ENCODE measurements at regions of chr1 and their contacts with region 1.

Region 1: DNA sequence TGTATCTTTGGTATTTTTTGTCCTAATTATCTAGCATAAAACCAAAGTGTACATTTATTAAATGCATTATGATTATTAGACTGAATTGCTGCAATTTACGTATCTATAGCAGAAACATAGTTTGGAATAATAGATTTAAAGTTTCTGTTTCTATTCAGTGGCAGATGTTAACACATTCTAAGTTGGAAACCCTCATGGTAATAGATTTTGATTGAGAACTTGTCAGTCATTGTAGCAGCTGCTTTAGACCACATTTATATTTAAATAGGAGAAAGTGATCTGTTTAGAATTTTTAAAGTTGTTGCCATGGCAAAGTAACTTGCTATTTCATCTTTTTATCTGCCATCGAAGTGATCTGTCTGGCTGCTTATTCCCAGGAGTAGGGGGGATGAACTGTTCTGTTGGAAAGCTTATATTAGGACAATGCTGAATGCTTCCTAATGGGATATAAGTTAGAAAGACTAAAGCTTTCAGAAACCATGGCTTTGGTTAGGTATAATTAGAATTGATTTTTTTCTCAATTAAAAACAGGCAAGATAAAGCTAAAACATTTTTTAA is 61.6 kb downstream of the HS2ST1 start:
- DNase-seq: no peak
- ATAC-seq: no peak
- H3K4me3 ChIP-seq: no peak overlapping the region
- H3K27ac ChIP-seq: no peak overlapping the region
- H3K4me1 ChIP-seq: no peaks in the 10 kb centered on the region
- H3K27me3 ChIP-seq: no peaks in the 10 kb centered on the region
- CTCF ChIP-seq: no peak
- EP300 ChIP-seq: no peak
- POLR2A ChIP-seq: no peak
- RAD21 ChIP-seq: no peak

Region 2: DNA sequence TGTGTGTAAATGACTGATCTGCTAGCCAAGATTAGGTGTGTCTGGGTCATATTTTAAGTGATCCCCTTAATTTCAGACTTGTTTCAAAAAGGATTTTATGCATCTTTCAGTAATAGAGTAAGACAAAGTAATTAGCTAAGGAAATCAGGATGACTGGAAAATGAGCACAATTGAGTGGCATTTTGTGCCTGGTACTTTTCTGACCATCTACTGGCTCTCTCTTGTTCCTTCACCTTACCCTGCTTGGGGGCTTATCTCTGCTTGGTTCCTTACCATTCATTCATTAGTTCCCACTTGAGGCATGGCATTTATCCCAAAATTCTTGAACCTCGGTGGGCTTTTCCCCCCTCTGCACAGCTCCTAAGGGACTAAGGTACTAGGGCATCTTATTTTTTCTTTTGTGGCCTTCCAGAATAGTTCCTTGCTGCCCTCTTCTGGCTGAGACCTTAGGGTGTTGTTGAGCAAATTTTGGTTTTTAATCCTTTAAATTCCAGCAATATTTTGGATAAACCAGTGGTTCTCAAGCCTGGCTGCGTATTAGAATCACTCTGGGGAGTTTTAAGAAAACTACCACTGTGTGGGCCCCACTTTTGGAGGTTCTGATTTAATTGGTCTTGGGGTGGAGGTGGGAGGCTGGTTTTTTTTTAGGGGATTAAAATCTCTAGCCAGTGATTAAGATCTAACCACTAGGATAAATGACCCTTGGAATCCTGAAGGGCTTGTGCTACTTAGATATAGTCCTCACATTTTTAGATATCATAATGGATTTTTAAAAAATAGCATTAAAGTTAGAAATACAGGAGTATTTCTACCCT is 10.9 kb before region 1 on chr1:
- CTCF ChIA-PET with region 1: interaction called, 10 read pairs
- POLR2A ChIA-PET with region 1: interaction called, 3 read pairs
- RAD21 ChIA-PET with region 1: interaction called, 7 read pairs
- SMC1A ChIA-PET with region 1: interaction called, 27 read pairs
- in situ Hi-C with region 1: no loop called
- intact Hi-C with region 1: no loop called
- DNase-seq: no peak
- ATAC-seq: peak; percentile 81
- H3K4me3 ChIP-seq: no peak overlapping the region
- H3K27ac ChIP-seq: peak overlapping the region; percentile 8; the same call in 1 of the 2 replicates
- H3K4me1 ChIP-seq: peaks cover 4% of the 10 kb centered on the region; the same call in 1 of the 2 replicates
- H3K27me3 ChIP-seq: no peaks in the 10 kb centered on the region
- CTCF ChIP-seq: peak; percentile 26 to 51 (median 47); a peak in 4 of 6 replicates
- EP300 ChIP-seq: no peak
- POLR2A ChIP-seq: no peak
- RAD21 ChIP-seq: peak; percentile 59; the same call in 1 of the 2 replicates

Region 3: DNA sequence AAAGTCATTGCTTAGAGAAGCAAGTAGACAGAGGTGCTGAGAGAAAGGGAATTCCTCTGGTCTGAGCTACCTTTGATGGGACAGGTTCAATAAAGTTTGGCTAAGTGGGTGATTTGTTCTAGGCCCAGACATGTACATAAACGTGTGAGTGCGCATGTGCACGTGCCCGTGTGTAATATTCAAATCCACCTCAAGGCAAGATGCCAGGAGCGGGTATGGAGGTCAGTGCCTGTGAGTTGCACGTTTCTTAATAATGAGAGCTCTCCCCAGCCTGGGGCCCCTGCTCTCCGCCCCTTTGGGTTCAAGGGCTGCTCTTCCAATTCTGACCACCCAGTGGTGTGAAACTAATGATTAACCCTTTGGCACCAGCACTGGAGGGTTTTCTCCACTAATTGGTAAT is 298.8 kb after region 1 on chr1:
- CTCF ChIA-PET with region 1: no interaction called
- POLR2A ChIA-PET with region 1: no interaction called
- RAD21 ChIA-PET with region 1: no interaction called
- SMC1A ChIA-PET with region 1: no interaction called
- in situ Hi-C with region 1: no loop called
- intact Hi-C with region 1: no loop called
- DNase-seq: no peak
- ATAC-seq: no peak
- H3K4me3 ChIP-seq: no peak overlapping the region
- H3K27ac ChIP-seq: no peak overlapping the region
- H3K4me1 ChIP-seq: no peaks in the 10 kb centered on the region
- H3K27me3 ChIP-seq: 0 out of 4 replicates have a peak, but pooled peaks cover 0 to 3% of the 10 kb centered on the region in 2 experiments
- CTCF ChIP-seq: no peak
- EP300 ChIP-seq: no peak
- POLR2A ChIP-seq: no peak
- RAD21 ChIP-seq: no peak

Measured in GM12878 (cell line).